Heart left ventricle (tissue), 16 donors: ENCODE measurements at regions of chr1 and their contacts with region 1.

Region 1: DNA sequence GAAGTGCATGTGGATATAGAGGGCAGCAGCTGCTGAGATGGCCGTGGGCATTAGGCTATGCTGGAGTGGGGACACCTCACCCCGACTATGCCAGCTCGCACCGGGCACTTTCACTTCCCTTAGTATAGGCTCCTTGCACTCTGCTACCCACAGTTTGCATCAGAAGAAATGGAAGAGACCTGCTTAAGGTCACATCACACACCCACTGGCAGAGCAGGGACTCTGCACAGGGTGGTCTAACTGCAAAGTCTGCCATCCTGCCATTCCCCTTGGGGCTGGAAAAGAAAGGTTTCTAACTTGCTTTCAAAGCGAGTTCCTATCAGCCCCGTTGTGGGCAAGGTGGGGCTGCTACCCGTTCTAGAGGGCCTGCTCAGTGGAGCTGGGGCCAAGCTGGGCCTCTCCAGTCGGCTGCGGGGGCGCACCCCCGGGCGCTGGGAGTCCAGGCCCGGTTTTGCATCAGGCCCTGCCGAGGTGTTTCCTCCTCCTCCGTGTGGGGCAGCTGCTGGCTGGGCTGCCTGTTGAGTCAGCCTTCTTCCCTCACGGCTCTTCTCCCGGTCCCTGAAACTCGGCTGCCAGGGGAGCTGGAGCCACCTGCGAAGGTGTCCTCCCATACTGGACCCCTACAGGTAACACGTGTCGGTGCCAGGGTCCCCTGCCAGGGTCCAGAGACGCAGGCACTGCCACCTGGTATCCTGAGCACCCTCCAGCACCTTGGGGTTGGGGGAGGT is at the start of gene SYTL1:
- DNase-seq: peak in 1 of 5 donors; percentile 66
- ATAC-seq: peak in 2 of 4 donors; percentile 25 to 51
- H3K4me3 ChIP-seq: peak within 1 kb of the TSS in 6 of 12 donors; percentile 2 to 60 (median 30)
- H3K27ac ChIP-seq: peak within 1 kb of the TSS in 3 of 12 donors; percentile 29 to 88 (median 37)
- H3K4me1 ChIP-seq: peaks cover 0 to 32% (median 4%) of the 10 kb centered on the region in 12 donors
- H3K27me3 ChIP-seq: no peaks in the 10 kb centered on the region
- CTCF ChIP-seq: no peak
- POLR2A ChIP-seq: no peak
- total RNA-seq, gene SYTL1: 0.23 to 6.0 (median 0.46) TPM in 8 of 9 donors, not detected in the other

Region 2: DNA sequence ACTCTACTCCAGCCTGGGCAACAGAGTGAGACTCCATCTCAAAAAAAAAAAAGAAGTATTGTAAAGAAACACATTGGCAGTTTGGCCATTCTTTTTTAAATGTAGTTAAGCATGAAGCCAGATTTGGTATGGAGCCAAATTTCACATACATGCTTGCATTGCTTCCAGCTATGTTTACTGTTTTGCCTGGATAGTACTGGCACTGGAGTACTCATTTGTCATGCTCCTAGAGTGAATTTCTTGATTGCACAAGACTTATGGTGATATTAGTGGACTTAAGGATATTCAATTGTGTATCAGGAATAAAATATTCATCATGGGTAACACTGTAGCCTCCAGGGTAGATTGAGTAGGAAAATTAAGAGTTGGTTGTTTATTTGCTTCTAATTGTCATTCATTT is 162.3 kb before region 1 on chr1:
- intact Hi-C with region 1: no loop called
- DNase-seq: no peak
- ATAC-seq: no peak
- H3K4me3 ChIP-seq: no peak overlapping the region
- H3K27ac ChIP-seq: no peak overlapping the region
- H3K4me1 ChIP-seq: no peaks in the 10 kb centered on the region
- H3K27me3 ChIP-seq: no peaks in the 10 kb centered on the region
- CTCF ChIP-seq: no peak
- POLR2A ChIP-seq: no peak

Region 3: GRCh38 chr1:27284425-27285273 is 57.0 kb before region 1 on chr1:
- intact Hi-C with region 1: no loop called
- DNase-seq: peak; percentile 72 to 89 (median 79)
- ATAC-seq: peak in 3 of 4 donors; percentile 79 to 82 (median 80)
- H3K4me3 ChIP-seq: no peak overlapping the region
- H3K27ac ChIP-seq: no peak overlapping the region
- H3K4me1 ChIP-seq: no peaks in the 10 kb centered on the region
- H3K27me3 ChIP-seq: no peaks in the 10 kb centered on the region
- CTCF ChIP-seq: peak; percentile 79 to 92 (median 88)
- POLR2A ChIP-seq: no peak

Region 4: DNA sequence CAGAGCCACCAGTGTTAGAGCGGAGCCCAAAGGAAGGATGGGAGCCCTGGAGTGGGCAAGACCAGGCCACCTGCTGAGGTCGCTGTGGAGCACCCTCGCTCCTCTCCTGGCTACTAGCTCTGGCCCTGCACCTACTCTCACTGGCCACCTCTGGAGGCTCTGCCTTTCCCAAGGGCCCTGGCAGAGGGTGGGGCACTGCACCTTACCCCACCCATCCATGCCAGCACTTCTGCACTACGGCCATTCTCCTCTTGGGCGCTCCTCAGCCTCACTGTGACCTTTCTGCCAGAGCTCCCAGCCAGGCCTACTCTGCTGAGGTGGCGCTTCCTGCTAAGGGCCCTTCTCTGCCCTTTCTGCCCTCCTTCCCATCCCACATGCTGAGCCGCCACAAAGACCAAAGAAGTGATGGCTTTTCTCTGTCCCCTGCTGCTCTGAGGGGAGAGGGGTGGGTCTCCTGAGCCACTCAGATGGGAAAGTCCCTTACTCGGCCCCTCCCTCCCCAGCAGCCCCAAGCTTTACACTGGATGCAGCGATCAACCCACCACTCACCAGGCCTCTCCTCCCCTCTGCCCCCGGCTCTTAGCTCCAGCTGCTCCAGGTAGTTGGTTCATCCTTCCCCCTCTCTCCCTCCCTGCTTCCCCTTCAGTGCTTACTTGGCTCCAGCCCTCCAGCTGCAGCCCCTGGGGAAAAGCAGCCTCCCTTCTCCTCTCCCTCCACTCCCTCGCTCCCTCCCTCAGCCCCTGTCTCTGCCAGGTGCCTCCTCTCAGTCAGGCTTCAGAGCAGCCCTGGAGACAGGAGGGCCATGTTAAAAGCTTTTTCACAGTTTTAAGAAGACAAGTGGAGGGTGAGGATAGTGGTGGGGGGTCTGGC is 34.6 kb before region 1 on chr1:
- intact Hi-C with region 1: loop called in 1 of 10 experiments (anchors 5 kb)
- DNase-seq: no peak
- ATAC-seq: peak in 1 of 4 donors; percentile 14
- H3K4me3 ChIP-seq: no peak overlapping the region
- H3K27ac ChIP-seq: no peak overlapping the region
- H3K4me1 ChIP-seq: no peaks in the 10 kb centered on the region
- H3K27me3 ChIP-seq: no peaks in the 10 kb centered on the region
- CTCF ChIP-seq: no peak
- POLR2A ChIP-seq: no peak

Region 5: GRCh38 chr1:27383039-27383605 is 41.4 kb after region 1 on chr1 and contains the start of gene CD164L2:
- intact Hi-C with region 1: no loop called
- DNase-seq: no peak
- ATAC-seq: peak in 1 of 4 donors; percentile 6
- H3K4me3 ChIP-seq: no peak within 1 kb of the TSS
- H3K27ac ChIP-seq: no peak within 1 kb of the TSS
- H3K4me1 ChIP-seq: peaks cover 0 to 27% (median under 1%) of the 10 kb centered on the region in 12 donors
- H3K27me3 ChIP-seq: peaks cover 0 to 5% (median 0%) of the 10 kb centered on the region in 9 donors
- CTCF ChIP-seq: no peak
- POLR2A ChIP-seq: no peak
- total RNA-seq, gene CD164L2: not detected